B cell (primary cell): ENCODE measurements at regions of chr15 and their contacts with region 1.

Region 1: GRCh38 chr15:70722266-70723121 is 40.9 kb downstream of the UACA start:
- DNase-seq: peak; percentile 57
- ATAC-seq: peak; percentile 39
- H3K4me3 ChIP-seq: no peak overlapping the region
- H3K4me3 Mint-ChIP-seq: no peak overlapping the region
- H3K27ac ChIP-seq: no peak overlapping the region
- H3K27ac Mint-ChIP-seq: no peak overlapping the region
- H3K4me1 ChIP-seq: no peaks in the 10 kb centered on the region
- H3K4me1 Mint-ChIP-seq: no peaks in the 10 kb centered on the region
- H3K27me3 ChIP-seq: peaks cover 0 to 11% (median 2%) of the 10 kb centered on the region in 4 experiments
- H3K27me3 Mint-ChIP-seq: peaks cover 7% of the 10 kb centered on the region
- CTCF ChIP-seq: peak; percentile 94

Region 2: GRCh38 chr15:70605606-70606410 is 116.7 kb before region 1 on chr15:
- CTCF ChIA-PET with region 1: no interaction called
- POLR2A ChIA-PET with region 1: no interaction called
- intact Hi-C with region 1: no loop called
- DNase-seq: no peak
- ATAC-seq: no peak
- H3K4me3 ChIP-seq: no peak overlapping the region
- H3K4me3 Mint-ChIP-seq: no peak overlapping the region
- H3K27ac ChIP-seq: no peak overlapping the region
- H3K27ac Mint-ChIP-seq: no peak overlapping the region
- H3K4me1 ChIP-seq: no peaks in the 10 kb centered on the region
- H3K4me1 Mint-ChIP-seq: no peaks in the 10 kb centered on the region
- H3K27me3 ChIP-seq: peaks cover 0 to 4% (median 0%) of the 10 kb centered on the region in 4 experiments
- H3K27me3 Mint-ChIP-seq: peaks cover 20% of the 10 kb centered on the region
- CTCF ChIP-seq: no peak

Region 3: DNA sequence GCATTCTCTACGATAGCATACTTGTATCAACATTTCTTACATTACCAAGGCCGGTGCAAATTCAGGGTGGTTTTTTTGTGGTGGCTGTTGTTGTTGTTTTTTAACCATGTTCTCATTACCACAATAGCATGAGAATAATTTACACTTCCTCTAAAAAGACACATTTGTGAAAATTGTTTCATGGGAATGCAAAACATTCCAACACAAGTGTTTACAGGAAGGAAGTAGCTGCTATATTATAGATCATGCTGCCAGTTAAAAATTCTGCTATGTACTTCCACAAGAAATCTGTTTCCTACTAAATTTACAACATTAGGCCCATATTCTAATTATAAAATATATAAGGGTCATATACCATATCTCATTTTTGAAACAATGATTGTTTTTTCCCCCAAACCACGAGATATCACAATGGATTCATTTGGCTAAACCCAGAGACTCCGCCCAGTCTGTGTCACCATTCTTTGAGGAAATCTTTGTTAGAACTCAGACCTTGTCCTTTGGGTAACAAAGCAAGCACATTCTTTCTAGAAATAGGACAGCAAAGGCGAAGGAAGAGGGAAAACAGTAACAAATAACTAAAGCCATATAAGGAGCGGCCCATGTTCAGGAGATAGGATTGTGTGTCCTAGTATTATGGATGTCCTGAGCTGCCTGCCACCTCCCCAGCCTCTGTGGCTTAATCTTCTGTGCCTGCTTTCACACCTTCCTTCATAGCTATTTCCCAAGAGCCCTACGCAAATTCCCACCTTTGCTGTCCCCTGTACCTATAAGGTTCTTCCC is 19.2 kb before region 1 on chr15:
- CTCF ChIA-PET with region 1: interaction called, 11 read pairs
- POLR2A ChIA-PET with region 1: no interaction called
- intact Hi-C with region 1: no loop called
- DNase-seq: no peak
- ATAC-seq: no peak
- H3K4me3 ChIP-seq: no peak overlapping the region
- H3K4me3 Mint-ChIP-seq: no peak overlapping the region
- H3K27ac ChIP-seq: no peak overlapping the region
- H3K27ac Mint-ChIP-seq: no peak overlapping the region
- H3K4me1 ChIP-seq: peaks cover 0 to 5% of the 10 kb centered on the region in 2 donors
- H3K4me1 Mint-ChIP-seq: peaks cover 9% of the 10 kb centered on the region
- H3K27me3 ChIP-seq: peaks cover 0 to 2% (median 0%) of the 10 kb centered on the region in 4 experiments
- H3K27me3 Mint-ChIP-seq: peaks cover 46% of the 10 kb centered on the region
- CTCF ChIP-seq: no peak